ENCODE measurements at regions of chr17 and their contacts with region 1.

Region 1: DNA sequence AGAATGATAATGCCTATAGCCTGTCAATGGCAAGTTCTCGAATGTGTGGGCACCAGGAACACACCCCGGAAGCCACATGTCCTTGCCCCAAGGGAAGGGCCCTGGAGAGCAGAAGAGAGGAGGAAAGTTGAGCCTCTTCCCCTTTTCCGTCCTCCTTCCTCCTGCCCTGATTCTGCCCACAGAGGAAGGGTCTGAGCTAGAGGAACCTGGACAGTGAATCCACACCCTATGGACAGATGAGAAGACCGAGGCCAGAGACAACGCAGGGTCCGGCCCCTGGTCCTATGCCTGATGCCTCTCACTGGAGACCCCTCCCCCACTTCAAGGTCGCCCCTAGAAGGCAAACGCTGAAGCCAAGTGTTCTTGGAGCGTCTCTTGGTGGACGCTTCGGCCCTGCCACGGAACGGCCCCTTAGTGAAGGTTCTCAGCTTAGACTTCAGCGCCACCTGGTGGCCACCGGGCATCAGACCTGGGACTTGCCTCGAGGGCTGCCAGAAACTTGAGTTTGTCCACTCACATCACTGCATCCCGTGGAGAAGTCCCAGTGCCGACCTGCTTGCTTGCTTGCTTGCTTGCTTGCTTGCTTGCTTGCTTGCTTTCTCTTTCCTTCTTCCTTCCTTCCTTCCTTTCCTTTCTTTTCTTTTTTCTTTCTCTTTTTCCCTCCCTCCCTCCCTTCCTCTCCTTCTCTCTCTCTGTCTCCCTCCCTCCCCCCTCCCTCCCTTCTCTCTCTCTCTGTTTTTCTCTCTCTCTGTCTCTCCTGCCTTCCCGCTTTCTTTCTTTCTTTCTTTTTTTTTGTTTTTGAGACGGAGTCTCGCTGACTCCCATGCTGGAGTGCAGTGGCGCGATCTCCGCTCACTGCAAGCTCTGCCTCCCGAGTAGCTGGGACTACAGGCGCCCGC is 20.6 kb upstream of the SPNS3 start:
- DNase-seq: peak; percentile 94 to 97 (median 95)
- H3K4me3 ChIP-seq: no peak overlapping the region
- H3K27ac ChIP-seq: no peak overlapping the region
- H3K4me1 ChIP-seq: peaks cover 0 to 4% (median 0%) of the 10 kb centered on the region in 3 donors
- H3K27me3 ChIP-seq: no peaks in the 10 kb centered on the region
- CTCF ChIP-seq: peak; percentile 95

Region 2: DNA sequence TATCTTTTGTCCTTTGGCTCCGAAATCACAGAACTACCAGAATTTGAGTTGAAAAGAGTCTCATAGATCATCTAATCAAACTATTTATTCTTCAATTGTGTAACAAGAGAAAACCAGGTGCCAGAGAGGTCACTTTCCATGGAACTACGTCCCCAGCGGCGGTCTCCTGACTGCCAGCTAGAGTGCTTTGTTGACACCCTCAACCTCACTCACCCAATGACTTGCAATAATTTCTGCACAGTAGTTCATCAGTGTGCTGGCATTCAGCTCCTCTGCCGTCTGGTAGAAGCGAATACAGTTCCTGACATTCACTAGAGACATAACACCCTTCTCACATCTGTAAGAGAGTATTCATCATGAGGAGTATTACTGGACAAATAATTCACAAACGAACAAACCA is 203.6 kb before region 1 on chr17:
- intact Hi-C with region 1: loop called (anchors 5 kb)
- DNase-seq: no peak
- H3K4me3 ChIP-seq: no peak overlapping the region
- H3K27ac ChIP-seq: no peak overlapping the region
- H3K4me1 ChIP-seq: no peaks in the 10 kb centered on the region
- H3K27me3 ChIP-seq: no peaks in the 10 kb centered on the region
- CTCF ChIP-seq: no peak

Region 3: GRCh38 chr17:4340914-4341615 is 72.1 kb before region 1 on chr17:
- intact Hi-C with region 1: no loop called
- DNase-seq: no peak
- H3K4me3 ChIP-seq: no peak overlapping the region
- H3K27ac ChIP-seq: no peak overlapping the region
- H3K4me1 ChIP-seq: no peaks in the 10 kb centered on the region
- H3K27me3 ChIP-seq: no peaks in the 10 kb centered on the region
- CTCF ChIP-seq: no peak